ENCODE measurements at regions of chr10 and their contacts with region 1.

Region 1: GRCh38 chr10:86936661-86937501 is 20.5 kb downstream of the MMRN2 start:
- DNase-seq: peak; percentile 68
- ATAC-seq: peak; percentile 24; the same call in 1 of the 2 replicates
- H3K4me3 ChIP-seq: no peak overlapping the region
- H3K27ac ChIP-seq: no peak overlapping the region
- H3K4me1 ChIP-seq: peaks cover 5% of the 10 kb centered on the region
- H3K27me3 ChIP-seq: no peaks in the 10 kb centered on the region
- CTCF ChIP-seq: no peak
- POLR2A ChIP-seq: no peak
- RAD21 ChIP-seq: no peak

Region 2: DNA sequence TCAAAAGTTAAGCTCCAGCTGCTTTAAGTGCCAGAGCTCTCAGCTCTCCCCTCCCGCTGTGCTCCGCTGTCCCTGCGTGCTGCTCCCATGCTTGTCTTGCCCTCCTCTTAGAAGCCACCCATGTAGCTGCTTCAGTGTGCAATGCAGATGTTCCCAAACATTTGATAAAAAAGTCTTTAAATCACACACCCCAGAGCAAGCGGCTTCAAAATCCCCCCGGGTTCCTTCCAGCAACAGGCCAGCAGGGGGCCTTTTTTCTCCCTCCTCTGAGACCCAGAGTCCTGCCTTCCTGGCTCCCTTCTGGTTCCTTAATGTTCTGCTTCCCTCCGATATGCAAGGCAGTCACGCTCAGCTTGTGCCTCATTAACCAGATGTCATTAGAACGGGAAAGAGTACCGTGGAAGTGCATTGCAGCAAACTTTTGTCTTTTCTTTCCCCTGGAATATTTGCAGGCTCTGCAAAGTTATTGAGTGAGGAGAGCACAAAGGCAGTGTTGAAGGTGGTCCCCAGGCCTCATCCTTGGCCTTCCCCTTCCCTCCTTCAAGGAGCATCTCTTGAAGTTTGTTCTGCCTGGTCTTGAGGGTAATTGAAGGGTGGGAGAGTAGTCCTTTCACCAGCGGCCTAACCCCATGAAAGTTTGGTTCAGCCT is 243.0 kb before region 1 on chr10:
- CTCF ChIA-PET with region 1: interaction called, 5 read pairs
- POLR2A ChIA-PET with region 1: no interaction called
- dilution Hi-C with region 1: no loop called
- in situ Hi-C with region 1: no loop called
- intact Hi-C with region 1: loop called (anchors 2 kb)
- DNase-seq: peak; percentile 51
- ATAC-seq: peak; percentile 93
- H3K4me3 ChIP-seq: no peak overlapping the region
- H3K27ac ChIP-seq: no peak overlapping the region
- H3K4me1 ChIP-seq: peaks cover 6% of the 10 kb centered on the region; the same call in 1 of the 2 replicates
- H3K27me3 ChIP-seq: no peaks in the 10 kb centered on the region
- CTCF ChIP-seq: peak; percentile 75
- POLR2A ChIP-seq: no peak
- RAD21 ChIP-seq: peak; percentile 60

Region 3: DNA sequence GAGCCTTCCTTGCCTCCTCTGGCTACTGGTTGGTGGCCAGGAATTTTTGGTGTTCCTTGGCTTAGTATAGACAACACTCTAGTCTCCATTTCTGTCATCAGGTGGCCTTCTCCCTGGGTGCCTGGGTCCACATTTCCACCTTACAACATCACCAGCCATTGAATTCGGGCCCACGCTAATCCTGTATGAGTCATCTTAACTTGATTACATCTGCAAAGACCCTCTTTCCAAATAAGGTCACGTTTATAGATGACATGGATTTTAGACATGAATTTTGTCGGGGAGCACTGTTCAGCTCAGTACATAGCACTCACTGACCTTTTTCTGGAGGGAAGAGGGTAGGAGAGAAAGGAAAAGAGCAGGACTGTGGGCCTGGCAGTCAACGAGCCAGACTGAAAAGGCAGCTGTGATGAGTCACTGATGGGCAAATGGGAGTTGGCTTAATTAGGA is 18.8 kb before region 1 on chr10:
- CTCF ChIA-PET with region 1: no interaction called
- POLR2A ChIA-PET with region 1: no interaction called
- dilution Hi-C with region 1: no loop called
- in situ Hi-C with region 1: no loop called
- intact Hi-C with region 1: no loop called
- DNase-seq: peak; percentile 77
- ATAC-seq: peak; percentile 89
- H3K4me3 ChIP-seq: no peak overlapping the region
- H3K27ac ChIP-seq: peak overlapping the region; percentile 58
- H3K4me1 ChIP-seq: peaks cover 5% of the 10 kb centered on the region
- H3K27me3 ChIP-seq: no peaks in the 10 kb centered on the region
- CTCF ChIP-seq: no peak
- POLR2A ChIP-seq: no peak
- RAD21 ChIP-seq: no peak

Region 4: GRCh38 chr10:86968271-86968993 is 31.6 kb after region 1 on chr10 and contains the start of gene ADIRF:
- CTCF ChIA-PET with region 1: interaction called, 4 read pairs
- POLR2A ChIA-PET with region 1: no interaction called
- dilution Hi-C with region 1: no loop called
- in situ Hi-C with region 1: no loop called
- intact Hi-C with region 1: loop called (anchors 1 kb)
- DNase-seq: no peak
- ATAC-seq: no peak
- H3K4me3 ChIP-seq: no peak within 1 kb of the TSS
- H3K27ac ChIP-seq: no peak within 1 kb of the TSS; the same call in 1 of the 2 replicates
- H3K4me1 ChIP-seq: peaks cover 36% of the 10 kb centered on the region
- H3K27me3 ChIP-seq: no peaks in the 10 kb centered on the region
- CTCF ChIP-seq: no peak
- POLR2A ChIP-seq: no peak
- RAD21 ChIP-seq: no peak
- total RNA-seq, gene ADIRF: 2.3 and 2.5 TPM in 2 replicates

Region 5: GRCh38 chr10:87066178-87066577 is 129.3 kb after region 1 on chr10:
- CTCF ChIA-PET with region 1: no interaction called
- POLR2A ChIA-PET with region 1: interaction called, 10 read pairs
- dilution Hi-C with region 1: no loop called
- in situ Hi-C with region 1: no loop called
- intact Hi-C with region 1: no loop called
- DNase-seq: no peak
- ATAC-seq: no peak
- H3K4me3 ChIP-seq: no peak overlapping the region
- H3K27ac ChIP-seq: no peak overlapping the region
- H3K4me1 ChIP-seq: no peaks in the 10 kb centered on the region
- H3K27me3 ChIP-seq: no peaks in the 10 kb centered on the region
- CTCF ChIP-seq: no peak
- POLR2A ChIP-seq: no peak
- RAD21 ChIP-seq: no peak

Region 6: GRCh38 chr10:87094373-87095235 is 157.7 kb after region 1 on chr10 and contains the starts of genes GLUD1 and SHLD2:
- CTCF ChIA-PET with region 1: no interaction called
- POLR2A ChIA-PET with region 1: no interaction called
- dilution Hi-C with region 1: no loop called
- in situ Hi-C with region 1: no loop called
- intact Hi-C with region 1: loop called (anchors 2 kb)
- DNase-seq: peak; percentile 84
- ATAC-seq: peak; percentile 85
- H3K4me3 ChIP-seq: peak within 1 kb of the TSS; percentile 84
- H3K27ac ChIP-seq: peak within 1 kb of the TSS; percentile 95
- H3K4me1 ChIP-seq: peaks cover 6% of the 10 kb centered on the region
- H3K27me3 ChIP-seq: no peaks in the 10 kb centered on the region
- CTCF ChIP-seq: peak; percentile 17; the same call in 1 of the 2 replicates
- POLR2A ChIP-seq: peak; percentile 87
- RAD21 ChIP-seq: no peak
- total RNA-seq, gene GLUD1: 210 and 222 TPM in 2 replicates
- total RNA-seq, gene SHLD2: 19.9 and 28.1 TPM in 2 replicates

Measured in IMR-90 (cell line).